ENCODE measurements at regions of chr5 and their contacts with region 1.

Region 1: GRCh38 chr5:76771705-76772405 is 47.0 kb upstream of the F2RL1 start:
- DNase-seq: no peak
- ATAC-seq: no peak
- H3K4me3 ChIP-seq: no peak overlapping the region
- H3K27ac ChIP-seq: no peak overlapping the region
- H3K4me1 ChIP-seq: peaks cover 5 to 21% of the 10 kb centered on the region in 2 experiments; a peak in 2 of 4 replicates
- H3K27me3 ChIP-seq: no peaks in the 10 kb centered on the region
- CTCF ChIP-seq: no peak
- POLR2A ChIP-seq: no peak
- RAD21 ChIP-seq: no peak

Region 2: GRCh38 chr5:76582230-76583162 is 189.4 kb before region 1 on chr5:
- CTCF ChIA-PET with region 1: interaction called, 14 read pairs
- POLR2A ChIA-PET with region 1: no interaction called
- RAD21 ChIA-PET with region 1: interaction called in 1 of 2 experiments, 3 read pairs
- intact Hi-C with region 1: no loop called
- DNase-seq: no peak
- ATAC-seq: no peak
- H3K4me3 ChIP-seq: no peak overlapping the region
- H3K27ac ChIP-seq: no peak overlapping the region
- H3K4me1 ChIP-seq: no peaks in the 10 kb centered on the region
- H3K27me3 ChIP-seq: no peaks in the 10 kb centered on the region
- CTCF ChIP-seq: no peak
- POLR2A ChIP-seq: no peak
- RAD21 ChIP-seq: no peak

Region 3: DNA sequence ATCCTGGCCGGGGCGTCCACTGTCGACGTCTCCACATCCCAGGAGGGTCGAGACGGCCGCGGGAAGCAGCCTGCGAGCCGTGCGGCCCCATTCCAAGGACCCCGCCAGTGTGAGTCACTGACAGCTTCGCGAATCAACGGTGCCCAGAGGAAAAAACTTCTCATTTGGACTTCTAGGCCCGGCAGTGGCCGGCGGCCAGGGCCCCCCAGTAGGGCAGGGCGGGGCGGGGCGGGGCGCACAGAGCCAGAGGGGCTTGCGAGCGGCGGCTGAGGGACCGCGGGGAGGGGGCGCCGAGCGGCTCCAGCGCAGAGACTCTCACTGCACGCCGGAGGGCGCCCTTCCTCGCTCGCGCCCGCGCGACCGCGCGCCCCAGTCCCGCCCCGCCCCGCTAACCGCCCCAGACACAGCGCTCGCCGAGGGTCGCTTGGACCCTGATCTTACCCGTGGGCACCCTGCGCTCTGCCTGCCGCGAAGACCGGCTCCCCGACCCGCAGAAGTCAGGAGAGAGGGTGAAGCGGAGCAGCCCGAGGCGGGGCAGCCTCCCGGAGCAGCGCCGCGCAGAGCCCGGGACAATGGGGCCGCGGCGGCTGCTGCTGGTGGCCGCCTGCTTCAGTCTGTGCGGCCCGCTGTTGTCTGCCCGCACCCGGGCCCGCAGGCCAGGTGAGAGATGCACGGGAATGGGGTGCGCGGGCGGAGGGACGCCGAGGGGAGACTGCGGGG is 56.0 kb before region 1 on chr5 and contains the start of gene F2R:
- CTCF ChIA-PET with region 1: interaction called, 6 read pairs
- POLR2A ChIA-PET with region 1: no interaction called
- RAD21 ChIA-PET with region 1: no interaction called
- intact Hi-C with region 1: loop called (anchors 5 kb)
- DNase-seq: no peak
- ATAC-seq: peak; percentile 92
- H3K4me3 ChIP-seq: peak within 1 kb of the TSS; percentile 66 to 83
- H3K27ac ChIP-seq: peak within 1 kb of the TSS; percentile 65; the same call in 1 of the 2 replicates
- H3K4me1 ChIP-seq: peaks cover 5 to 23% of the 10 kb centered on the region in 2 experiments; a peak in 3 of 4 replicates
- H3K27me3 ChIP-seq: no peaks in the 10 kb centered on the region
- CTCF ChIP-seq: peak; percentile 31 to 49 (median 44); a peak in 4 of 6 replicates
- POLR2A ChIP-seq: no peak
- RAD21 ChIP-seq: peak; percentile 58
- total RNA-seq, gene F2R: 16.6 TPM

Region 4: DNA sequence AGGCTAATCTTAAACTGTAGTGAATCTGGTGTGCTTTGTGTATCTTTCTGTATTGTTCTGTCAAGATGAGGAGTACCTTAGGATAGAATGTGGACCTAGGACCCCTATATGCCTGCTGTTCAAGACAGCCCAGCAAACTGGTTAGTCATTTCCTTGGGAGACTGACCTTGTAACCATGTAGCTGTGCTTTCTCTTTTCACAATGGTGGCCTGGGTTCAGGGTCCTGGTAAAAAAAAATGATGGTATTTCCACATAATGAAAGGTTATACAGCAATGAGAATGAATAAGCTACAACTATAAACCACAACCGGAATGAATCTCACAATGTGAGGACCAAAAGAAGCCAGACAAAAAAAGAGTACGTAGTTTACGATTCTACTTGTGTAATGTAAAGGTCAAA is 10.6 kb after region 1 on chr5:
- CTCF ChIA-PET with region 1: interaction called, 15 read pairs
- POLR2A ChIA-PET with region 1: interaction called, 6 read pairs
- RAD21 ChIA-PET with region 1: no interaction called
- intact Hi-C with region 1: no loop called
- DNase-seq: no peak
- ATAC-seq: no peak
- H3K4me3 ChIP-seq: no peak overlapping the region
- H3K27ac ChIP-seq: no peak overlapping the region
- H3K4me1 ChIP-seq: peaks cover 18 to 47% of the 10 kb centered on the region in 2 experiments
- H3K27me3 ChIP-seq: no peaks in the 10 kb centered on the region
- CTCF ChIP-seq: no peak
- POLR2A ChIP-seq: no peak
- RAD21 ChIP-seq: no peak

Region 5: DNA sequence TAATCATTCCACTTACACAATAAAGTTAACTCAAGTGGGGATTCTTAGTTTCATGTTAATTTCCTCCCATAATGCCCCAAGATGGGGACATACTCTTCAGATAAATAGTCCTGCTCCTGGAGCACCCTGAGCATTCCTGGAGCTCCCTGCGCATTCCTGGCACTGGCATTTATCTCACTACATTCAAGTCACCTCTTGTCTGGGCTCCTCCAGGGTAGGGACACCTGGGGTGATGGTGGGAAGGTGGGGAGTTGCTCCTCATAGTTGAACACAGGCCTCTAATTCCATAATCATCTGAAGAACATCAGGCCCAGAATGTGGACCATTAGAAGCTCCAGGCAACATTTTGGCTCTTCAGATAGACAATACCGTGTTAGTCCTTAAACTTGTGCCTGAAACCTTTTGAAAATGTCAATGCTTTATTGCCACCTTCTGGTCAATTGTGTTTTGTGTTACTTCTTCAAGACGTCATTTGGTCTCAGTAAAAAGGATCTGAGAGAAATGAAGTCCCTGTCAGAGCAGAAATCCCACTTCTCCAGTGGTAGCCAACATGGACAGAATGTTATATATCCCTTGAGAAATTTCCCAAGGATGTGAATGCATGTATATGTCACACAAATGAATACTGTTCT is 244.2 kb after region 1 on chr5:
- CTCF ChIA-PET with region 1: no interaction called
- POLR2A ChIA-PET with region 1: no interaction called
- RAD21 ChIA-PET with region 1: no interaction called
- intact Hi-C with region 1: loop called (anchors 10 kb)
- DNase-seq: peak; percentile 57
- ATAC-seq: peak; percentile 81
- H3K4me3 ChIP-seq: no peak overlapping the region
- H3K27ac ChIP-seq: no peak overlapping the region
- H3K4me1 ChIP-seq: peaks cover 0 to 5% of the 10 kb centered on the region in 2 experiments; a peak in 1 of 4 replicates
- H3K27me3 ChIP-seq: no peaks in the 10 kb centered on the region
- CTCF ChIP-seq: peak; percentile 26 to 77 (median 59); a peak in 5 of 6 replicates
- POLR2A ChIP-seq: no peak
- RAD21 ChIP-seq: peak; percentile 81